ENCODE measurements at regions of chr7 and their contacts with region 1.

Region 1: DNA sequence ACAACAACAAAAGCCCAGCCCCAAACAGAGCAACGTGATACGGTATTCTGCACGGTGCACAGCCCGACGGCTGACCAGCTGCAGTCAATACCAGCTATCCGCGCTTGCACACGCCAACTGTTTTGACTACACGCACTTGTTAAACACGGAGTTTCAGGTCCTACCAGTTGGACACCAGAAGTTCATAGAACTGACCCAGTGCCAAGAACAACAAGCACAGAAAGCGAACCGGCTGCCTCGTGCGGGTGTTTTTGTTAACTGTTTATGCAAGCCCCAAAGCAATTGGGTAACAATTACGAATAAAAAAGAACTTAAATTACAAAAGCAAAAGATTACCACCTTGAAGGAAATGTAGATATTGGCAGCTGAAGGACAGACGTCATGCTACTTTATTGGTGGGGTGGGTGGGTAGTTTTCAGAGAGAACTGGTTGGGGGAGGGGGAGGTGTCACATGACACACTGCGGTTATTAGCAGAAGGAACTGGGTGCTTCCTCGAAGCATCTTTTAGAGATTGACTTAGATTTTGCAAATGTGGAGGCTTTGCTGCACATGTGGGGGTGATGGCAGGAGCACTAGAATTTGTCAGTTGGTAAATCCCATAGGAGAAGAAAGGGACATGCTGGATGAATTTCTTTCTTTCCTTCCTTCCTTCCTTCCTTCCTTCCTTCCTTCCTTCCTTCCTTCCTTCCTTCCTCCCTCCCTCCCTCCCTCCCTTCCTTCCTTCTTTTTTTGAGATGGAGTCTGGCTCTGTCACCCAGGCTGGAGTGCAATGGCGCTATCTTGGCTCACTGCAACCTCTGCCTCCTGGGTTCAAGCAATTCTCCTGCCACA is 110.7 kb upstream of the EFCAB10 start:
- DNase-seq: peak; percentile 80
- H3K4me3 ChIP-seq: peak overlapping the region; percentile 60
- H3K27ac ChIP-seq: peak overlapping the region; percentile 68
- H3K27me3 ChIP-seq: no peaks in the 10 kb centered on the region
- CTCF ChIP-seq: no peak

Region 2: DNA sequence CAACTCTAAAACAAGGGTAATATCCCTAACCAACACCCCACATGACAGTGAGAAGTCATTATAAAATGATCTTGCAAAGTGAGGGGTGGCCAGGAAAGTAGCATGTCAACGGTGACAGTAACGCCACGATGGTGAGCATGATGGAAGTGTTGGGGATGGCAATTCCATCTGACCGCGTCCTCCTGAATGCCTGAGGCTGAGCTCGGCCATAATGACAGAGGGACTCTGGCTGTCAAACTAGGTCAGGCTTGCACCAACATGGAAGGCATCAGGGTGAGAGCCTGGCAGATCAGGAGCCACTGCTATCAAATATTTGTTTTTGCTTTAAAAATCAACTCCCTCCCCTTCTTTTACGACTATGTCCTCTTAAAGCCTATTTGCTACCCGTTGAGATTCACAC is 55.0 kb before region 1 on chr7:
- CTCF ChIA-PET with region 1: interaction called, 10 read pairs
- POLR2A ChIA-PET with region 1: no interaction called
- DNase-seq: no peak
- H3K4me3 ChIP-seq: no peak overlapping the region
- H3K27ac ChIP-seq: no peak overlapping the region
- H3K27me3 ChIP-seq: no peaks in the 10 kb centered on the region
- CTCF ChIP-seq: no peak